ENCODE measurements at regions of chr4 and their contacts with region 1.

Region 1: GRCh38 chr4:151760712-151761527 is at the start of gene GATB:
- DNase-seq: peak; percentile 82 to 97 (median 92)
- ATAC-seq: peak; percentile 98
- H3K4me3 ChIP-seq: peak within 1 kb of the TSS; percentile 73 to 82
- H3K4me3 Mint-ChIP-seq: peak within 1 kb of the TSS; percentile 97
- H3K27ac ChIP-seq: peak within 1 kb of the TSS; percentile 59 to 75
- H3K27ac Mint-ChIP-seq: peak within 1 kb of the TSS; percentile 98
- H3K4me1 ChIP-seq: peaks cover 15% of the 10 kb centered on the region
- H3K4me1 Mint-ChIP-seq: peaks cover 18% of the 10 kb centered on the region
- H3K27me3 ChIP-seq: no peaks in the 10 kb centered on the region
- H3K27me3 Mint-ChIP-seq: no peaks in the 10 kb centered on the region
- CTCF ChIP-seq: peak; percentile 51
- total RNA-seq, gene GATB: 3.3 to 5.1 TPM

Region 2: DNA sequence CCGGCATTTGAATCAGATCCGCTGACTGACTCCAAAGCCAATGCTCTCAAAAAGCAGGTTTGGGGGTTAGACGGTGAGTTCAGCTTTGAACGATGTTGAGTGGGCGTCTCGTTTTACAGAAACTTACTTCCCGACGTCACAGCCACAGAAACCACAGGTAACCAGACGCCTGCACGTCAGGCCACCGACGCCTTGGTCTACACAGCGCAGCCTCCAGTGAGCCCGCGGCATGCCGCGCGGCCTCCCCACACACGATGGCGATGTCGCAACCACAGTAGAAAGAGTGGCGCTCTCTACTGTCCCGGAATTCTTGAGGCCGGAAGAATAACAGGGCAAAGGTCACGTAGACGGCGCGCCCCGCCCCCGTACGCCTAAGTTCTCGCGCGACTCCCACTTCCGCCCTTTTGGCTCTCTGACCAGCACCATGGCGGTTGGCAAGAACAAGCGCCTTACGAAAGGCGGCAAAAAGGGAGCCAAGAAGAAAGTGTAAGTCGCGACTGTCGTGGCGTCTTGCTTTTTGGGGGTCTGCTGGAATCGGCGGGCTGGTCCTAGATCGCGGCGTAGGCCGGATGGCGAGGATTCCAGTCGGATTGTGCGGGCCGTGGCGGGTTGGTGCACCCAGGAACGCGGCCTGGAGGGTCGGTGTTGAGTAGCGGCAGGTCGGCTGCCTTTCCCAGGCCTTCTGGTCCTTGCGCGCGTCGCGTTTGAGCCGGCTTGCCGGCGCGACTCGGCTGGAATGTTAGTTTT is 661.5 kb before region 1 on chr4 and contains the start of gene RPS3A:
- CTCF ChIA-PET with region 1: no interaction called
- POLR2A ChIA-PET with region 1: no interaction called
- intact Hi-C with region 1: loop called in 1 of 2 experiments (anchors 2 kb)
- DNase-seq: peak; percentile 94 to 99 (median 98)
- ATAC-seq: peak; percentile 90
- H3K4me3 ChIP-seq: peak within 1 kb of the TSS; percentile 85 to 97
- H3K4me3 Mint-ChIP-seq: peak within 1 kb of the TSS; percentile 97
- H3K27ac ChIP-seq: peak within 1 kb of the TSS; percentile 88 to 96
- H3K27ac Mint-ChIP-seq: peak within 1 kb of the TSS; percentile 98
- H3K4me1 ChIP-seq: peaks cover 29% of the 10 kb centered on the region
- H3K4me1 Mint-ChIP-seq: peaks cover 35% of the 10 kb centered on the region
- H3K27me3 ChIP-seq: peaks cover 0 to 2% of the 10 kb centered on the region in 2 experiments
- H3K27me3 Mint-ChIP-seq: no peaks in the 10 kb centered on the region
- CTCF ChIP-seq: peak; percentile 84
- total RNA-seq, gene RPS3A: 3,746 to 3,978 TPM

Region 3: DNA sequence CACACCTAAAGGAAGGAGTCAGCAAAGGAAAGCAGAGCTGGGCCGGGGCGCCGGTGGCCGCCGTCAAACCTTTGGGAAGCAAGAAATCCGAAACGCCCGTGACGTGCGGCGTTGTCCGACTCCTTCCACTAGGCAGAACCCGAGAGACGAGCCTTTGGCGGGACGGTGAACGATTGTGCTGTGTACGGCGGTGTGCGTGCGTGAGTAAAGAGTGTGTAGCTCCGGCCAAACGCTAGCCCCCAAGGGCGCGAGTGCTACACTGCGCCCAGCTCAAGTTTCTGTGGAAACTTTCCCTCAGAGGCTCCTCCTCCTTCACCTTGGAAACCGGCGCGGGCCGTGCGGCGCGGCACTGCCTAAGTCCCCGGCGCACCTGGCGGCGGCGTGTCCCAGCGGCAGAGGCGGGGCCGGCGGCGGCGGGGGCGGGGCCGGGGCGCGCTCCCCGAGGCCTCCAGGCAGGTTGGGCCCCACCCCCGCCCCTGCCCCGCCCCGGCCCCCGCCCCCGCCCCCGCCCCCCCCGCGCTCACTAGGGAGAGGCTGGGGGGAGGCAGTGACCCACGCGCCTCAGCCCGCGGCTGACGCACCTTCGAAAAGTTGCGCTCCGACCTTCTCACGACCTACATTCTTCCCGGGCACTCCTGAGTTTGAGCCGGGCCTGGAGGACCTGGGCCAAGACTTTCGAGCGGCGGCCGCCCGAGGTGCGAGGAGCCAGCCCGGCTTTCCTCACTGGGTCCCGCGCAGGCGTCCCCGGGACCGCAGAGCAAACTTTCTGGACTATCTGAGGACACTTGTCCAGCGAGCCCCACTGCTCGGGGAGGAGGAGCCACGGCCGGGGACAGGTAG is 352.1 kb before region 1 on chr4 and contains the start of gene FHIP1A:
- CTCF ChIA-PET with region 1: no interaction called
- POLR2A ChIA-PET with region 1: no interaction called
- intact Hi-C with region 1: loop called (anchors 2 to 5 kb)
- DNase-seq: peak; percentile 60 to 87 (median 82)
- ATAC-seq: peak; percentile 96
- H3K4me3 ChIP-seq: peak within 1 kb of the TSS; percentile 60 to 66
- H3K4me3 Mint-ChIP-seq: peak within 1 kb of the TSS; percentile 93
- H3K27ac ChIP-seq: peak within 1 kb of the TSS in 1 of 2 experiments; percentile 24
- H3K27ac Mint-ChIP-seq: peak within 1 kb of the TSS; percentile 67
- H3K4me1 ChIP-seq: peaks cover 17% of the 10 kb centered on the region
- H3K4me1 Mint-ChIP-seq: peaks cover 25% of the 10 kb centered on the region
- H3K27me3 ChIP-seq: no peaks in the 10 kb centered on the region
- H3K27me3 Mint-ChIP-seq: peaks cover 18% of the 10 kb centered on the region
- CTCF ChIP-seq: no peak
- total RNA-seq, gene FHIP1A: 1.5 to 2.1 TPM

Region 4: DNA sequence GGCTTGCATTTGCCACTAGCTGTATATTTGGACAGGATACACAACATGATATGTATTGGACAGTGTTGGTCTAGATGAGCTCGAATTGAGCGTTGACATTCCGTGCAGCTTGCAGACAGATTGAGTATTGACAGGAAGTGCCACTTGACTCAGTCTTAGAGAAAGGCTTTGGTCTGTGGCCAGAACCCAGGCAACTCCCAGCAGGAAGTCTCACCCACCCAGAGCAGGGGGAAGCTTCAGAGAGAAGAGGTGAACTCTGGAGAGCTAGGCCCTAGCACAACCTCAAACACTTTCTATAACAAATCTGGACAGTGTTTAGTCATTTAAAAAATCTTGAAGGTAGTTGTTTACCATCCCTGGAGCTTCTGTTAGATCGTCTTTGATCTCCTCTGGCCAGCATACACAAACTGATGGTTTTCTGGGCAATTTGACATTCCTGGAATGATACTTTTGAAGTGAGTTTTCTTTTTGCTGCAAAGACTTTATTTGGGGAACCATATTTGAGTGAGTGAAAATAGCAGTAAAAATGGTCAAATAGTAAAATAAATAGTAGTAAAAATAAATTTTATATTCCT is 494.6 kb after region 1 on chr4:
- CTCF ChIA-PET with region 1: no interaction called
- POLR2A ChIA-PET with region 1: no interaction called
- intact Hi-C with region 1: loop called in 1 of 2 experiments (anchors 5 kb)
- DNase-seq: peak; percentile 15 to 87 (median 69)
- ATAC-seq: peak; percentile 98
- H3K4me3 ChIP-seq: no peak overlapping the region
- H3K4me3 Mint-ChIP-seq: no peak overlapping the region
- H3K27ac ChIP-seq: peak overlapping the region in 1 of 2 experiments; percentile 40
- H3K27ac Mint-ChIP-seq: no peak overlapping the region
- H3K4me1 ChIP-seq: peaks cover 49% of the 10 kb centered on the region
- H3K4me1 Mint-ChIP-seq: peaks cover 23% of the 10 kb centered on the region
- H3K27me3 ChIP-seq: no peaks in the 10 kb centered on the region
- H3K27me3 Mint-ChIP-seq: no peaks in the 10 kb centered on the region
- CTCF ChIP-seq: no peak

Region 5: DNA sequence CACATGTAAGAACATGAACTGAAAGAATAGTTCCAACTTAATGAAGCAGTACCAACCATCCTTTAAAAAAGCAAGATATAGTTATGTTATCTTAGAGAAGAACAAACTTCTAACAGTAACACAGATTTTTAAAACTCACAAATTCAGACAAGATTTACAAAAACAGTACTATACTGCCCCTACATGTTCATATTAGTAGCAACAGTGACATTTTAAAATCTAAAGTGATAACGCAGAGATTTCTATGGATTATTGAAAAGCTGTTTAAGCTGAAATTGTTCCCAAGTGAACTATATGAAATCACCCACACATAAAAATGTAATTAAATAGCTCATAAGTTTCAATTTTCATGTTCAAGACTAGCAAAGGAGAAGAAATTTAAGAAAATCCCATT is 609.0 kb after region 1 on chr4:
- CTCF ChIA-PET with region 1: interaction called, 3 read pairs
- POLR2A ChIA-PET with region 1: no interaction called
- intact Hi-C with region 1: loop called (anchors 1 to 5 kb)
- DNase-seq: peak in 1 of 9 experiments; percentile 26
- ATAC-seq: no peak
- H3K4me3 ChIP-seq: no peak overlapping the region
- H3K4me3 Mint-ChIP-seq: no peak overlapping the region
- H3K27ac ChIP-seq: no peak overlapping the region
- H3K27ac Mint-ChIP-seq: no peak overlapping the region
- H3K4me1 ChIP-seq: no peaks in the 10 kb centered on the region
- H3K4me1 Mint-ChIP-seq: peaks cover 13% of the 10 kb centered on the region
- H3K27me3 ChIP-seq: no peaks in the 10 kb centered on the region
- H3K27me3 Mint-ChIP-seq: no peaks in the 10 kb centered on the region
- CTCF ChIP-seq: peak; percentile 53

Region 6: GRCh38 chr4:152679414-152680281 is 918.7 kb after region 1 on chr4 and contains the start of gene TMEM154:
- CTCF ChIA-PET with region 1: no interaction called
- POLR2A ChIA-PET with region 1: no interaction called
- intact Hi-C with region 1: loop called in 1 of 2 experiments (anchors 5 kb)
- DNase-seq: peak; percentile 44 to 86 (median 71)
- ATAC-seq: peak; percentile 97
- H3K4me3 ChIP-seq: peak within 1 kb of the TSS; percentile 67 to 68
- H3K4me3 Mint-ChIP-seq: peak within 1 kb of the TSS; percentile 93
- H3K27ac ChIP-seq: peak within 1 kb of the TSS; percentile 58 to 67
- H3K27ac Mint-ChIP-seq: peak within 1 kb of the TSS; percentile 95
- H3K4me1 ChIP-seq: peaks cover 12% of the 10 kb centered on the region
- H3K4me1 Mint-ChIP-seq: peaks cover 46% of the 10 kb centered on the region
- H3K27me3 ChIP-seq: no peaks in the 10 kb centered on the region
- H3K27me3 Mint-ChIP-seq: no peaks in the 10 kb centered on the region
- CTCF ChIP-seq: no peak
- total RNA-seq, gene TMEM154: 10.0 TPM

Measured in CD8-positive, alpha-beta T cell (primary cell).